ENCODE measurements at regions of chr5 and their contacts with region 1.

Region 1: GRCh38 chr5:150217873-150218692 is 28.2 kb downstream of the SLC6A7 start:
- DNase-seq: peak; percentile 72
- ATAC-seq: peak; percentile 91
- H3K4me3 ChIP-seq: no peak overlapping the region
- H3K27ac ChIP-seq: no peak overlapping the region
- H3K4me1 ChIP-seq: peaks cover 18% of the 10 kb centered on the region
- H3K27me3 ChIP-seq: peaks cover 3 to 59% of the 10 kb centered on the region in 2 experiments; a peak in 4 of 5 replicates
- CTCF ChIP-seq: peak; percentile 94
- EP300 ChIP-seq: no peak
- POLR2A ChIP-seq: no peak
- RAD21 ChIP-seq: peak; percentile 92

Region 2: DNA sequence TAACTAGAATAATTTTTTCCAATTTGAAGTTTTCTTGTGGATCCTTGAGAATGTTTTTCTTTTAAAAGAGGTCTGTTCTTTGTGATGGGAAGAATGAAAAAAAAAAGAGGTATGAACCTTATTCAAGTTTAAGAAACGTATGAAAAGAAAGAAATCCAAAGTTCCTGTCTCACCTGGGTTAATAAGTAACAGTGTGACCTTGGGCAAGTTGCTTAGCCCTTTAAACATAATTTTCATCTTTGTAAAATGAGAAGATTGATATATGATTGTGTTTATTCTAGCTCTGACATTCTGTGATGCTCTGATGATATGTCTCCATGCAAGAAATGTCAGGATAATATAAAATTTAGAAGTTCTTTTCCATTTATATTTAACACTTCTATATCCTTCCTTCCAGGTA is 238.2 kb before region 1 on chr5:
- CTCF ChIA-PET with region 1: no interaction called
- POLR2A ChIA-PET with region 1: no interaction called
- in situ Hi-C with region 1: no loop called
- intact Hi-C with region 1: no loop called
- DNase-seq: no peak
- ATAC-seq: no peak
- H3K4me3 ChIP-seq: no peak overlapping the region
- H3K27ac ChIP-seq: no peak overlapping the region
- H3K4me1 ChIP-seq: peaks cover 67% of the 10 kb centered on the region
- H3K27me3 ChIP-seq: no peaks in the 10 kb centered on the region
- CTCF ChIP-seq: no peak
- EP300 ChIP-seq: 0 out of 4 replicates have a peak, but pooled peaks of 1 of the 2 experiments have one; percentile 5
- POLR2A ChIP-seq: no peak
- RAD21 ChIP-seq: no peak

Region 3: DNA sequence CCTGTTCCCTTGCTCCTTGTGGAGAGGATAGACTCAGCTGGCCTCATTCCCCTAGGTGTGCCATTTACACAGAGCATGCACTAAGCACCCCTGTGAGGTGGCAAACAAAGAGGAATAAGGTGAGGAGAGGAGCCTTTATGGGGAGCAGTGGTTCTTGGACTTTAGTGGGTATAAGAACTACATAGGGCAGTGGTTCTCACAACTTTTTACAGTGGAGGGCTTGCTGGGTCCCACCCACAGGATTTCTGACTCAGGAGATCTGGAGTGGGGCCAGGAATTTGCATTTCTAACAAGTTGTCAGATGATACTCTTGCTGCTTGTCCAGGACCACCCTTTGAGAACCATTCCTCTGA is 173.8 kb before region 1 on chr5:
- CTCF ChIA-PET with region 1: no interaction called
- POLR2A ChIA-PET with region 1: no interaction called
- in situ Hi-C with region 1: no loop called
- intact Hi-C with region 1: loop called (anchors 1 kb)
- DNase-seq: no peak
- ATAC-seq: no peak
- H3K4me3 ChIP-seq: no peak overlapping the region
- H3K27ac ChIP-seq: no peak overlapping the region
- H3K4me1 ChIP-seq: no peaks in the 10 kb centered on the region
- H3K27me3 ChIP-seq: no peaks in the 10 kb centered on the region
- CTCF ChIP-seq: no peak
- EP300 ChIP-seq: no peak
- POLR2A ChIP-seq: no peak
- RAD21 ChIP-seq: no peak

Region 4: GRCh38 chr5:150129813-150130492 is 88.1 kb before region 1 on chr5:
- CTCF ChIA-PET with region 1: interaction called, 62 read pairs
- POLR2A ChIA-PET with region 1: no interaction called
- in situ Hi-C with region 1: loop called (anchors 5 kb)
- intact Hi-C with region 1: loop called (anchors 1 kb)
- DNase-seq: peak; percentile 67
- ATAC-seq: peak; percentile 88
- H3K4me3 ChIP-seq: no peak overlapping the region
- H3K27ac ChIP-seq: no peak overlapping the region
- H3K4me1 ChIP-seq: peaks cover 43% of the 10 kb centered on the region
- H3K27me3 ChIP-seq: no peaks in the 10 kb centered on the region
- CTCF ChIP-seq: peak; percentile 99
- EP300 ChIP-seq: 0 out of 4 replicates have a peak, but pooled peaks have one; percentile 35 to 39
- POLR2A ChIP-seq: no peak
- RAD21 ChIP-seq: peak; percentile 98

Region 5: GRCh38 chr5:150161242-150162141 is 56.6 kb before region 1 on chr5:
- CTCF ChIA-PET with region 1: interaction called, 25 read pairs
- POLR2A ChIA-PET with region 1: no interaction called
- in situ Hi-C with region 1: loop called (anchors 5 kb)
- intact Hi-C with region 1: loop called (anchors 1 kb)
- DNase-seq: peak; percentile 69
- ATAC-seq: peak; percentile 88
- H3K4me3 ChIP-seq: peak overlapping the region; percentile 29 to 73 (median 34); a peak in 5 of 6 replicates
- H3K27ac ChIP-seq: no peak overlapping the region
- H3K4me1 ChIP-seq: peaks cover 71% of the 10 kb centered on the region
- H3K27me3 ChIP-seq: peaks cover 1 to 2% of the 10 kb centered on the region in 2 experiments; a peak in 3 of 5 replicates
- CTCF ChIP-seq: peak; percentile 87
- EP300 ChIP-seq: no peak
- POLR2A ChIP-seq: no peak
- RAD21 ChIP-seq: peak; percentile 69

Region 6: DNA sequence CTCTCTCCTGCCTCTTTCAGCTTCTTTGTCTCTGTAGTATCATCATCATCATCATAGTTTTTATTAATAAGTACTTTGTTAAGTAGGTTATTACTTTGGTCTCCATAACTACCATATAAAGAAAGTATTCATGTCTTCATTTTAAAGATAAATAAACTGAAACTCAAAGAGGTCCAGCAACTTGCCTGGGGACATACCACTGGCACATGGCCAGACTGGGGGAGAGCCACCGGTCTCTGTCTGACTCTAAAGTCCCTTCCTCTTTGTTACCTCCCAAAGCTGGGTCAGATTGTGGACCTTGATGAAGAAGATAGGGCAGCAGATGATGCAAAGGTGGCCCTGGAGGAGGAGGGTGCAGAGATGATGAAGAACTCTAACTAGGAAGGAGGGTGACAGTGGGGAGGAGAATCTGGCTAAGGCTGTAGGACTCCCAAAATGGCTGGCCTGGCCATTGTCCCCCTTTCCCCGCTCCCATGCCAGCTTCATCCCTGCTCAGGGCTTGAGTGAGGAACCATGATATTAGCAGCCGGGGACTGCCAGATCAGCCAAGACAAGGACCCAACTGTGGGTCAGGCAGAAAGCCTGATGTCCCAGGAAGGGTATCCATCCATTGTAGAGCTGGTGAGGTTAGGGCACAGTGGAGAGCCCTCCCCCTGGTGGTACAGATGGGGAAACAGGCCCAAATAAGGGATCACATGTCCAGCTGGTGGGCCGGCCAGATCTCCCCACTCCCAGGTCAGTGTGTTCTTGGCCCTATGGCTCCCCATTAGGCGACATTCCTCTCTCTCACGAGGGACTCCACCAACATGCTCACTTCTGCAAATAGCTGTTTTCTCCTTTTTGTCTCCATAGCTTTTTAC is 42.8 kb before region 1 on chr5:
- CTCF ChIA-PET with region 1: interaction called, 8 read pairs
- POLR2A ChIA-PET with region 1: no interaction called
- in situ Hi-C with region 1: no loop called
- intact Hi-C with region 1: loop called (anchors 1 kb)
- DNase-seq: peak; percentile 62
- ATAC-seq: peak; percentile 96
- H3K4me3 ChIP-seq: no peak overlapping the region
- H3K27ac ChIP-seq: no peak overlapping the region
- H3K4me1 ChIP-seq: peaks cover 5% of the 10 kb centered on the region
- H3K27me3 ChIP-seq: peaks cover 0 to 28% of the 10 kb centered on the region in 2 experiments; a peak in 3 of 5 replicates
- CTCF ChIP-seq: peak; percentile 84
- EP300 ChIP-seq: no peak
- POLR2A ChIP-seq: no peak
- RAD21 ChIP-seq: peak; percentile 64

Region 7: DNA sequence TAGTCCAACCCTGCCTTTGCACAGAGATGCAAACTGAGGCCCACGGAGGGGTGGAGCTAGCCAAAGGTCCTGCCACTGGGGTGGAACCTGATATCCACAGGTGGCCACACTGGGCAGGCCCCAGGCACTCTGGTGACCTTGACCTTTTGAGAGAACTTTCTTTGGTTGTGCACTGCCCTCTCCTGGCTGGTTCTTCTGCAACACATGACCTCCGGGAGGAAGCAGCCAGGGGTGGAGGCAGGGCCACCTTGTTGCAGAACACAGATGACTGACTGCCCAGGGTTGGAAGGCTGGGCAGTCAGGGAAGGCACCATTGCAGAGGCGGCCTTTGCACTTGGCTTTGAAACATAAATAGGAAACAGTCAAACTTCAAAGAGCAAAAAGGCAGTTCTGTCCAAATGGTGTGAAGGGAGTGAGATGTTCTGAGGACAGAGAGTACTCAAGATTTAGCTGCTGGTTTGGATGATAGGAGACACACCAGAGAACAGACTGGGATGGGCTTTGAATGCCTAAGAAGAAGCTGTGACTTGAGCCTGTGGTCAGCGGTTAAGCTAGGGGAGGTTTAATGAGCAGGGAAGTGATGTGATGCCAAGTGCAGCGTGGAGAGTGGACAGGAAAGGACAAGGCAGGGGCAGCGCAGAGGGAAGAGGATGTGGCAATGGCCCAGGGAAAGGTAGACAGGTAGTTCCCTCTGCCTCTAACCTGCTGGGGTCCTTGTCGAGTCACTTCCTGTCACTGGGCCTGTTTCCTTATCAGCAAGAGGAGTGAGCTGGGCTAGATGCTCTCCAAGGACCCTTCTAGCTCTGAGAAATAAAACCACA is 132.7 kb after region 1 on chr5:
- CTCF ChIA-PET with region 1: interaction called, 3 read pairs
- POLR2A ChIA-PET with region 1: no interaction called
- in situ Hi-C with region 1: no loop called
- intact Hi-C with region 1: loop called (anchors 1 kb)
- DNase-seq: peak; percentile 91
- ATAC-seq: peak; percentile 98
- H3K4me3 ChIP-seq: peak overlapping the region in 1 of 3 experiments; percentile 11; a peak in 1 of 6 replicates
- H3K27ac ChIP-seq: no peak overlapping the region
- H3K4me1 ChIP-seq: peaks cover 61% of the 10 kb centered on the region
- H3K27me3 ChIP-seq: no peaks in the 10 kb centered on the region; a peak in 1 of 5 replicates
- CTCF ChIP-seq: peak; percentile 98
- EP300 ChIP-seq: peak in 1 of 2 experiments; percentile 41; a peak in 1 of 4 replicates
- POLR2A ChIP-seq: no peak
- RAD21 ChIP-seq: peak; percentile 93

Measured in HepG2 (cell line).